Right ventricle myocardium inferior (tissue), 1 donor: ENCODE measurements at regions of chr6 and their contacts with region 1.

Region 1: DNA sequence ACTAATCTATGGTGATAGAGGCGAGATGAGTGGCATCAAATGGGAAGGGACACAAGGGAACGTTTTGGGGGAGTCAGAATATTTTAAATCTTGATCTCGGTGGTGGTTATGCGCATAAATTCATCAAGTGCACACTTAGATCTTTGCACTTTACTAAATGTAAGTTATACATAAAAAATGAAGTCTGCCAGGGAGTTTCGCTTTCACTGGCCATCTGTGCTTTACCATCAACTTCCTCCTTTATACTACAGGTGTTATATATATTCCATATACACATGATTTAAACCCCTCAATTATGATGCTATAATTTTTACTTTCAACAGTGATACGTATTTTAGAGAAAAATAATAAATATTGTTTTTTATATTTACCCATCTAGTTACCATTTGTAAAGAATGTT is 97.6 kb upstream of the AKIRIN2 start:
- DNase-seq: no peak
- ATAC-seq: no peak

Region 2: GRCh38 chr6:87618531-87618930 is 181.1 kb before region 1 on chr6:
- intact Hi-C with region 1: loop called (anchors 10 kb)
- DNase-seq: no peak
- ATAC-seq: no peak

Region 3: DNA sequence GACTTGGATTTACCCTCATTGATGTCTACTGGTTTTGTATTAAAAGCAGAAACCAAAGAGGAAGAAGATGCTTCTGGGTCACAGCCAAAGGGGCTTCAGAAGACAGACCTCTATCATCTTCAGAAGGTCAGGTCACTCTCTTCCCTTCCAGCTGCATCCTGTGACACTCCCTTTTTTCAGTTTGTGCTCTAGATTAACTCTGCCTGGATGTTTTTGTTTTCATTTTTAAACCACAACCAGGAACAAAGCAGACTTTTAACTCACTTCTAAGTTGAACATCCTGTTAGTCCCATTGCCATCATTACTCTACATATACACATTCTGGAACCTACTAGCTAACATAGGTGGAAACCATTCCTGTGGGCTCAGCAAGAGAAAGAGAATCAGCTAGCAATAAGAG is 142.8 kb before region 1 on chr6:
- intact Hi-C with region 1: loop called (anchors 10 kb)
- DNase-seq: no peak
- ATAC-seq: no peak

Region 4: GRCh38 chr6:87701676-87702588 is 97.7 kb before region 1 on chr6 and contains the start of gene AKIRIN2:
- intact Hi-C with region 1: loop called (anchors 10 kb)
- DNase-seq: peak; percentile 97
- ATAC-seq: peak; percentile 94
- total RNA-seq, gene AKIRIN2: 36.1 TPM

Region 5: DNA sequence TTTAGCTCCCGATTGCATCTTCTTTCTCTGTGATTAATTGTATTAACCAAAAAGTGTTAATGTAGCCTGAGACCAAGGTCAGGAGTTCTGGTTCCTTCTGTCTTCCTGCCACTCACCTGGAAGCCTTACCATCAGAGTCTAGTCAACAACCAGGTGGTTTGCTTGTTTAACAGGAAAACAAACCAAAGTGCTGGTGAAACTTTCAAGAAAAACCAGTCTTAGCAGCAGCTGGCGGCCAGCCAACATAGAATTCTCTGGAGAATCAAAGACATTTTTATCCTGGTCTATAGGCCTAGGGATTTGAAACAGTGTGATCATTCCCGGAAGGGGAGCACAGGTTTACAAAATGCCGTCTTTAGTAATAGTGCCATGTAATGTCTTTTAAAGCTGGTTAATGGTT is 48.9 kb after region 1 on chr6:
- intact Hi-C with region 1: no loop called
- DNase-seq: no peak
- ATAC-seq: no peak